ENCODE measurements at regions of chr12 and their contacts with region 1.

Region 1: DNA sequence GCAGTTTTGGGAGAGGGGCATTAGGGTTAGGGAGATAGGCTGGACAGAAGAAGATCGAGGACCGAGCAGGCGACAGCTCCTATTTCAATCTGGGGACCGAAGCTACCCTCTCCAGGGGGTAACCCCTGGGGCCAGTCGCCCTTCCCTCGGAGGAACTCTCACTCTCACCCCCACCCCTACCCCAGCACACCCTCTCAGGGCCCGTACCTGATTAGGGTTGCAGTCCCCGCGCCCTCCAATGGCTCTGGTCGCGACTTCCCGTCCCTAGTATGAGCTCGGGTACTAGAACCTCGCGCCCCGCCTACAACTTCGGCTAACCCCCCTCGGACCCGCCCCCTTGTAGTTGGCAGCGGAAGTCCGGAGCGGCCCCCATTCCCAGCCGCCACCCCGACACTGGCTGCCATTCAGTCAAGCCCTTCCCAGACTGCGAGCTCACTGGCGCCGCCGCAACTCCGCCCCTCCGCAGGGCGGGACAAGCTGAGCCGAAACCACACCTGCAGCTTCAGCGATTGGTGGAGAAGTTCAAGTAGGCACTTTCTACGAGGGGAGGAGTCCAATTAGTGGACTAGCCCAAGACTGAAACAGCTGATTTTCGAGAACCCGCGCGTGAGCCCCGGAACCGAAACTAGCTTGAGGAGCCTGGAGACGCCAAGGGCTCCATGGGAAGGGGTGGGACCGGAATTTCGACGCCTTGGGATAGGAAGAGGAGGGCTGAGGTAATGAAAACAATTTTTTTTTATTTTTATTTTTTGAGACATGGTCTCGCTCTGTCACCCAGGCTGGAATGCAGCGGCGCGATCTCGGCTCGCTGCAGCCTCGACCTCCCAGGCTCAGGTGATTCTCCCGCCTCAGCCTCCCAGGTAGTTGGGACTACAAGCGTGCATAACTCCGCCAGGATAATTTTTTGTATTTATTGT is at the start of gene STAT2:
- DNase-seq: peak; percentile 100
- H3K4me3 Mint-ChIP-seq: peak within 1 kb of the TSS; percentile 91
- H3K27ac Mint-ChIP-seq: peak within 1 kb of the TSS; percentile 99
- H3K4me1 Mint-ChIP-seq: peaks cover 32% of the 10 kb centered on the region
- H3K27me3 Mint-ChIP-seq: no peaks in the 10 kb centered on the region
- total RNA-seq, gene STAT2: 391 to 398 TPM

Region 2: DNA sequence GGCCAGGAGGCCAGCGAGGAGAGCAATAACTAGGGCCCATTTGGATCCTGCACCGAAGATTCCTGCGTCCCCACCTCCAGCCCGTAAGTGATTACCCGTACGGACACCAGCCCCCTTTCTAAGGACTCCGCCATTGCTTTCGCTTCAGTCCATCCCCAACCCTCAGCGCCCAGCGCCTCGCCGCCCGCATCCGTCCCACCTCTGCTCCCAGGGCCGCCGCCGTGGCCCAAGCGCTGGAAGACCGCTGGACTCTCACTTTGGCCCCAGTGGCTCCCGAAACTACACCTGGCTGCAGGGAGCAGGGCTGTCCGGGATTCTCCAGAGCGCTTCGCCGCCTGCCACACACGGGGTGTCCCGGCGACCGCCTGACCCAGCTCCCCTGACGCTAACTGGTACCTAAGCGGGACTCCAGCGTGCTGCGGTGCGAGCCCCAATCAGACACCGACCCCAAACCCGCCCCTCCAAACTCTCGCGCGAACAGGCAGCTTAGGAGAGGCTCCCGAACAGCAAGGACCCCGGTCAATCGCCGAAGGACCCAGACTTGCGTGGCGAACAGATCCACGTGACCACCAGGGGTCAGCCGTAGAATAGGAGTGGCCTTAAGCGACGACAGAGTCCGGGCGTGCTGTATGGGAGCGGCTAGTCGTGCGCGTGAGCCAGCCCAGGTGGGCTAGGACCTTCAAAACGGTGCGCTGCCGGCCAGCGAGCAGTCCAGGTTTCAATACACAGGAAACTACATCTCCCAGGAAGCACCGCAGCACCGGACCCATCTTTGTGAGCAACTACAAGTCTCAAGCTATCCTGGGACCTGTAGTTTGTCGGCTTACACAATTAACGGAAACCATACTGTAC is 44.3 kb before region 1 on chr12 and contains the start of gene CNPY2:
- CTCF ChIA-PET with region 1: interaction called, 7 read pairs
- POLR2A ChIA-PET with region 1: interaction called, 10 read pairs
- DNase-seq: peak; percentile 96
- H3K4me3 Mint-ChIP-seq: peak within 1 kb of the TSS; percentile 97
- H3K27ac Mint-ChIP-seq: peak within 1 kb of the TSS; percentile 97
- H3K4me1 Mint-ChIP-seq: peaks cover 24% of the 10 kb centered on the region
- H3K27me3 Mint-ChIP-seq: no peaks in the 10 kb centered on the region
- total RNA-seq, gene CNPY2: 96.2 to 105 TPM